ENCODE measurements at regions of chr10 and their contacts with region 1.

Region 1: GRCh38 chr10:45594276-45595106 is 78.1 kb downstream of the ZFAND4 start:
- DNase-seq: peak; percentile 92 to 97 (median 94)
- ATAC-seq: peak; percentile 94 to 98 (median 97)
- H3K4me3 ChIP-seq: peak overlapping the region; percentile 48 to 79 (median 67)
- H3K27ac ChIP-seq: peak overlapping the region; percentile 45 to 86 (median 76)
- H3K4me1 ChIP-seq: peaks cover 0 to 15% (median 0%) of the 10 kb centered on the region in 3 donors
- H3K27me3 ChIP-seq: no peaks in the 10 kb centered on the region
- CTCF ChIP-seq: no peak

Region 2: DNA sequence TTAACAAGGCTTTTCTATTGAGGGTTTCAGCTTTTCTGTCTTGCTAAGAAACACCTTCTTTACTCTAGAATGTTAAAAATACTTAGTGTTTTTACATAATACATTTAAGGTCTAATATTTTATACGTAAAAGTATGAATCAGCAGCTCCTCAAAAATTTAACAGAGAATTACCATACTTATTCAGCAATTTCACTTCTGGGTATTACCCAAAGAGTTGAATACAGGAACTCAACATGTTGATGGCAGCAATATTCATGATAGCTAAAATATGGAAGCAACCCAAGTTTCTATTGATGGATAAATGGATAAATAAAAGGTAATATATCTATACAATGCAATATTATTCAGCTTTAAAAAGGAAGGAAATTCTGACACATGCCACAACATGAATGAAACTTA is 269.4 kb before region 1 on chr10:
- intact Hi-C with region 1: no loop called
- DNase-seq: no peak
- ATAC-seq: no peak
- H3K4me3 ChIP-seq: no peak overlapping the region
- H3K27ac ChIP-seq: no peak overlapping the region
- H3K4me1 ChIP-seq: no peaks in the 10 kb centered on the region
- H3K27me3 ChIP-seq: no peaks in the 10 kb centered on the region
- CTCF ChIP-seq: no peak

Region 3: DNA sequence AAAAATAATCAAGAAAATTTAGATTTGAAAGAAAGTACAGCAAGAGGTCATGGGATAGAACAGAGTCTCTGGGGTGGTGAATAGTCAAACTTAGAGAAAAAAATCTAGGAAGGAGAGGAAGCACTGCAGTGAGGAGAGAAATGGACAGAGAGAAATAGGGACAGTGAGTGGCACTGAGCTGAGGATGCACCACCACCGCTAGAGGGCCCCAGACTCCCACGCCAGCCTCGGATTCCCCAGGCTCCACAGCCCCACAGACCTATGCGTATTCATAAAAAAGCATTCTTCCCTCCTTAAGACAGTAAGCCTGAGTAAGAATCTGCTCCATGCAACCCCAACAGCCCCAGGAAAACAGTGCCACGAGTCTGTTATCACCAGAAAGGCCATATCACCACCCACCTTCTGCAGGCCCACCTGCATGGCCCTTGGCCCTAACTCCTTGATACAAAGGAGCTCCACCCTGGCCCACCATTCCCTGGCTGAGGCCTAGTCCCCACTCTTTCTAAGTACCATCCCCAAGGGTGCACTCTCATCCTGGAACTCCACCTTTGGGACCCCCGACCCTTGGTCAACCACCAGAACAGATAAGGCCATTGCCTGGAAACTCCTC is 129.4 kb before region 1 on chr10:
- intact Hi-C with region 1: loop called in 2 of 3 experiments (anchors 5 to 10 kb)
- DNase-seq: peak; percentile 56 to 88 (median 74)
- ATAC-seq: peak; percentile 96 to 98 (median 96)
- H3K4me3 ChIP-seq: no peak overlapping the region
- H3K27ac ChIP-seq: no peak overlapping the region
- H3K4me1 ChIP-seq: peaks cover 0 to 3% (median 3%) of the 10 kb centered on the region in 3 donors
- H3K27me3 ChIP-seq: no peaks in the 10 kb centered on the region
- CTCF ChIP-seq: peak; percentile 83 to 90 (median 84)